Lower leg skin (tissue), 4 donors: ENCODE measurements at regions of chr15 and their contacts with region 1.

Region 1: DNA sequence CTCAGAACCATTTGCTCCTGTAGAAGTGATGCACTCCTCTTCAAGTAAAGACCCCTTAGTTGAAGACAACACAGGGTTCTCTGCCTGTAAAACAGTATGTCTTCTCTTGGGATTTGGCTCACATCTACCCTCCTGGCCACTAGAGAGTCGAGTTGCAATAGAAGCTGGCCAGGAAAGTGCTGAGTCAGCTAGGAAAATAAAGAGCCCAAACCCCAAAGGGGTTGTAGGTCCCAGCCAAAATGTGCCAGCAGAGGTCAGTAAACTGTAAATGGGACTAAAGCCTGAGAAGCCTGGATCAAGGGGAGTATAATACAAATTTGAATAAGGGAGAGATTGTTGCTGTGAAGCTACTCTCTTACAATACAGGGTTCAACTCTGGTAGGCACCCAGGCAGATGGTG is 37.2 kb upstream of the THBS1 start:
- DNase-seq: no peak
- H3K4me3 ChIP-seq: no peak overlapping the region
- CTCF ChIP-seq: no peak
- POLR2A ChIP-seq: no peak

Region 2: GRCh38 chr15:38486936-38487335 is 1056.7 kb before region 1 on chr15:
- intact Hi-C with region 1: loop called (anchors 5 kb)
- DNase-seq: no peak
- H3K4me3 ChIP-seq: no peak overlapping the region
- CTCF ChIP-seq: no peak
- POLR2A ChIP-seq: no peak